Naive thymus-derived CD8-positive, alpha-beta T cell (primary cell): ENCODE measurements at regions of chr3 and their contacts with region 1.

Region 1: DNA sequence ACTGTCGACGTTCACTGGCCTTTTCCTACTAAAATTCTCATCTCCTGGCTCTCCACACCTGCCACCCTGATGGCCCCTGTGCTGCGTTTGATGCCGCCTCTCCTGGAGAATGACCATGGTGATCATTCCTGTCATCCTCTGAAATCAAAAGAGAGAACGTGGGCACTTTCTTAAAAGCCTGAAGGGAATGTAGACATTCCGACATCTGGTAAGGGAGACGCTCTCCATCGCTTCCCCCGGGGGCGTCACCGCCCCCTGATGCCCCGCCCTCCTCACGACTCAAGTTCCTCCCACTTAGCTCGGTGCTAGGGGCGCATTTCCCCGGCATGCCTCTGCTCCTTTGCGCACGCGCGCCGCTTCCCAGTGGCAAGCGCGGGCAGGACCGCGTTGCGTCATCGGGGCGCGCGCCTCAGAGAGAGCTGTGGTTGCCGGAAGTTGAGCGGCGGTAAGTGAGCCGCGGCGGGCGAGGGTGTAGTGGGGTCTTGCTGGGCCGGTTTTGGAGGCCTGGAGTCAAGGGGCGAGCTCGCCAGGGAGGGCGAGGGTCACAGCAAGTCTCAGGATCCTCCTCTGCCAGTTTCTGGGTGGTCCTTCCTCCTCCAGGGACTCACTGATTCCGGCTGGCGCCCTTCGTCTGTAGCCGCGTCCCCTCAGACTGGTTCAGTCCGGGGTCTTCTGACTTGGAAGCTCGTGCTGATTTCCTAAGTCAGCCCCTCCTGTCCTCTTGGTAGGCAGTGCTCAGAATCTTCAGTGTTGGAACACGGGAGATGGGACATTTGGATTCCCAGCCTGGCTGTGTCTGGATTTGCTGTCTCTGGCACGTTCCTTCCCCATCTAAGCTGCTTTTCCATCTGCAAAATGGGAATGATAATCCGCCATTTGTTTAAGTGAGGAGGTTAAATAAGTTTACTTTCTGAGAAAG is at the start of gene ATG7:
- DNase-seq: peak; percentile 94 to 98 (median 96)
- ATAC-seq: peak; percentile 91 to 94
- H3K4me3 Mint-ChIP-seq: peak within 1 kb of the TSS; percentile 94 to 98 (median 96)
- H3K27ac Mint-ChIP-seq: peak within 1 kb of the TSS; percentile 96 to 100 (median 99)
- H3K4me1 Mint-ChIP-seq: peaks cover 32 to 53% (median 45%) of the 10 kb centered on the region in 4 donors
- H3K27me3 Mint-ChIP-seq: peaks cover 0 to 3% (median 2%) of the 10 kb centered on the region in 5 donors
- polyA plus RNA-seq, gene ATG7: 6.0 to 15.3 (median 10.3) TPM

Region 2: GRCh38 chr3:11211531-11212298 is 60.5 kb before region 1 on chr3:
- POLR2A ChIA-PET with region 1: no interaction called
- DNase-seq: no peak
- ATAC-seq: no peak
- H3K4me3 Mint-ChIP-seq: no peak overlapping the region
- H3K27ac Mint-ChIP-seq: no peak overlapping the region
- H3K4me1 Mint-ChIP-seq: no peaks in the 10 kb centered on the region
- H3K27me3 Mint-ChIP-seq: peaks cover 1 to 9% (median 4%) of the 10 kb centered on the region in 5 donors

Region 3: GRCh38 chr3:11288786-11289682 is 16.8 kb after region 1 on chr3:
- POLR2A ChIA-PET with region 1: interaction called, 64 read pairs
- DNase-seq: peak in 3 of 10 donors; percentile 13 to 31 (median 25)
- ATAC-seq: peak; percentile 55
- H3K4me3 Mint-ChIP-seq: peak overlapping the region in 9 of 10 donors; percentile 25 to 70 (median 62)
- H3K27ac Mint-ChIP-seq: peak overlapping the region; percentile 67 to 96 (median 91)
- H3K4me1 Mint-ChIP-seq: peaks cover 34 to 62% (median 54%) of the 10 kb centered on the region in 4 donors
- H3K27me3 Mint-ChIP-seq: no peaks in the 10 kb centered on the region